MCF 10A (cell line): ENCODE measurements at regions of chr5 and their contacts with region 1.

Region 1: GRCh38 chr5:172770675-172771438 is at the start of gene DUSP1:
- DNase-seq: peak; percentile 99
- H3K4me3 Mint-ChIP-seq: peak within 1 kb of the TSS; percentile 98
- H3K27ac Mint-ChIP-seq: peak within 1 kb of the TSS; percentile 99
- H3K4me1 Mint-ChIP-seq: peaks cover 50% of the 10 kb centered on the region
- H3K27me3 Mint-ChIP-seq: no peaks in the 10 kb centered on the region
- CTCF ChIP-seq: peak; percentile 30
- total RNA-seq, gene DUSP1: 594 and 611 TPM in 2 replicates

Region 2: DNA sequence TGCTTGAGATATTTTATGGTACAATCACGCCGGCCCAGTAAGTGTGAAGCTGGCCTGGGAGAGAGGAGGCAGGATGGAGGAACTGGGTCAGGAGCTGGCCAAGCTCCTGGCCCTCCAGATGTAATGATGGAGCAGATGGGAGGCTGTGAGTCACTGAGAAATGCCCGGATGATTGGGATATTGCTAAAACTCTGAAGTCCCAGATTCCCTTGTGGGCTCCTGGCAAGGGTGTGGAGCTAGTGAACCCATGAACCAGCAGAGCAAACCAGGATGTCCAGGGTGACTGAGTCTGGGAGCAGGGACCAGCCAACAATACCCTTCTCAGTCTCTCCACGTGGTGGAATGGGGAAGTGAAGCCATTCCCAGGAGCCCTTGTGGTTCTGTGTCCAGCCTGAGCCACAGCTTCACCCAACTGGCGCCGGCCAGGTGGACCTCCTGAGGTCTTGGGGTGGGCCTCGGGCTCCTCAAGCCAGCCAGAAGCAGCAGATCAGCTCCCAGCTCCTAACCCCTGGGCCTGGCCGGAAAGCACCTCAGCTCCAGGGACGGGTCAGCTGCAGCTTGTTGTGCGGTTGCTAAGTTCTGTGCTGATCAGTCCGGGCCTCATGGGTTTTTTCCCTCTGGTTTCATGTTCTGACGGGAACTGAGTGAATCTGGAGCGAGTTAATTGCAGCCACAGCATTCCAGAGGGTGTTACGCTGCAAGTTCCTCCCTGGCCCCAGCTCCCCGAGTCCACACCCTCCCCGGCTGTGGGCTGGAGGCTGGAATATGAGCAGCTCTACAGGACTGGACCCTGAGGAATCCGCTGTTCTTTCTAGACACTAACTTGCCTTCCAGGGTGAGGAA is 37.5 kb before region 1 on chr5:
- CTCF ChIA-PET with region 1: interaction called, 35 read pairs
- POLR2A ChIA-PET with region 1: interaction called, 287 read pairs
- intact Hi-C with region 1: no loop called
- DNase-seq: peak; percentile 93
- H3K4me3 Mint-ChIP-seq: peak overlapping the region; percentile 63
- H3K27ac Mint-ChIP-seq: peak overlapping the region; percentile 99
- H3K4me1 Mint-ChIP-seq: peaks cover 44% of the 10 kb centered on the region
- H3K27me3 Mint-ChIP-seq: no peaks in the 10 kb centered on the region
- CTCF ChIP-seq: peak; percentile 18

Region 3: GRCh38 chr5:172801184-172801671 is 30.4 kb after region 1 on chr5:
- CTCF ChIA-PET with region 1: interaction called, 52 read pairs
- POLR2A ChIA-PET with region 1: interaction called, 1,263 read pairs
- intact Hi-C with region 1: loop called (anchors 1 kb)
- DNase-seq: peak; percentile 94
- H3K4me3 Mint-ChIP-seq: peak overlapping the region; percentile 22
- H3K27ac Mint-ChIP-seq: peak overlapping the region; percentile 89
- H3K4me1 Mint-ChIP-seq: peaks cover 53% of the 10 kb centered on the region
- H3K27me3 Mint-ChIP-seq: no peaks in the 10 kb centered on the region
- CTCF ChIP-seq: no peak

Region 4: GRCh38 chr5:172849606-172850453 is 79.0 kb after region 1 on chr5:
- CTCF ChIA-PET with region 1: interaction called, 5 read pairs
- POLR2A ChIA-PET with region 1: interaction called, 431 read pairs
- intact Hi-C with region 1: no loop called
- DNase-seq: peak; percentile 68
- H3K4me3 Mint-ChIP-seq: no peak overlapping the region
- H3K27ac Mint-ChIP-seq: peak overlapping the region; percentile 49
- H3K4me1 Mint-ChIP-seq: peaks cover 78% of the 10 kb centered on the region
- H3K27me3 Mint-ChIP-seq: no peaks in the 10 kb centered on the region
- CTCF ChIP-seq: no peak

Region 5: DNA sequence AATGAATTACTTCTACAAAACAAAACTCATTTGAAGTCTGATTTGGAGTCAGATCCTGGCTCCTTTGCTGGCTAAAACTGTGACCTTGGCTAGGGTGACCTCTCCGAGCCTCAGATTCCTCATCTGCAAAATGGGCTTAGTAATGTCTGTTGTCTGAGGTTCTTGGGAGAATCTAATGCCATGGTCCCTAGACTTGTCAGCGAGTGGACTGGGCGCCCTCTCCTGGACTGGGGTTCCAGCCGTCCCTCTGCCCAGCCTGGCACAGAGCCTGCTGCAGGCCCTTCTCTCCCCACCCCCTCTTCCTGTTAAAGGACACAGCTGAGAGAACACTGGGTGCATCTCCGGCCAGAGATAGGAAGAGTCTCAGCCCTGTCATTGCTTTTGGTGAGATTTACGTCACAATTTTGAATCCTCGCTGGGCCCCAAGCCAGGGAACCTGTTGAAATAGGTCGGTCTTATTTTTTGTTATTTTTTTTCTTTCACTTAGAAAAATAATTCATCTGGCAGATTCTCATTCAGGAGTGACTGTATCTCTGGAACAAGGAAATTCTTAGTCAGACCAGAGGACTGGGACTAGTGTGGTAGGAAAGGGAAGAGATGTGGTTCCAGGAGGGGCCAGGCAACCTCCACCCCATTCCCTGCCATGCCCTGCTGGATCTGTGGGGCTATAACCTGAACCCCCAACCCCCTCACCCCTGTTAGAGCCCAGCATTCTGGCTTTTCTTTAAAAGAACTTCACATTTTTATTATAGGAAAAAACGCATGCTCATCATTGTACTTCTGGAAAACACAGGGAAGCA is 140.2 kb after region 1 on chr5:
- CTCF ChIA-PET with region 1: interaction called, 35 read pairs
- POLR2A ChIA-PET with region 1: interaction called, 910 read pairs
- intact Hi-C with region 1: loop called (anchors 1 kb)
- DNase-seq: peak; percentile 99
- H3K4me3 Mint-ChIP-seq: no peak overlapping the region
- H3K27ac Mint-ChIP-seq: peak overlapping the region; percentile 90
- H3K4me1 Mint-ChIP-seq: peaks cover 43% of the 10 kb centered on the region
- H3K27me3 Mint-ChIP-seq: no peaks in the 10 kb centered on the region
- CTCF ChIP-seq: peak; percentile 50

Region 6: DNA sequence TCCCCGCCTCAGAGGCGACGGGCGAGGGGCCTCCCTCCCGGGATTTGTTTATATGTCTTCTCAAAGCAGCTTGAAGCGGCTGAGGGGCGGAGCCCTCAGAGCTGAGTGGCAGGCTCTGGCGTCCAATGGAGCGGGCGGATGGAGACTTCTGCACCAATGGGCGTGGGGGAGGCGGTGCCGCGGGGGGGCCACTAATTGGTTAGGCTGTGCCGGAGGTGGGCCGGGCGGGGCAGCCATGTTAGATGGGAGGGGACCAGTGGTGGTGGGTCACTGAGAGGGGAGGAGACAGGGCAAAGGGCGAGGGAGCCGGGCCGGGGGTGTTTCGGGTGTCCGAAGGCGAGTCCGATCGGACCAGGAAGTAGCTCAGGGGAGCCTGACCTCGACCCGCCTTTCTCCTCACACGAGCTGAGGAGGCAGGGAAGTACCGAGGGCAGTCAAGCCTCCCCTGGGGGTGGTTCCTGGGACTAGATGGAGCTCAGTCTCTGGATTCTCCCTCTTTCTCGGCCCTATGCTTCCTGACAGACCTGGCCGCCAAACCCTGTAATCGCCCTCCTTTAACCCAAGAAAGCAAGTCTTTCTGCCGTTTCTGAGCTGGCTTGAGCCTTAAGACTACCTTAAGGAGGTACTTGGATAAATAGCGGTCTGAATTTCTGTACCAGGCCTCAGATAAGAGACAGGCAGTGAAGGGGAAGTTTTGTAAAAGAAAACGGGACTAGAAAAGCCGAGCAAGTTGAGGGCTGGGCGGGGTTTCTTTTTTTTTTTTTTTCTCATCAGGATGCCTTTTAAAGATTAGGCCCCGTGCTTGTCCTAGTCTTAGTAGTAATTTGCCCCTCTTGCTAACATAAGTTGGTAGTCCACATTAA is 286.4 kb after region 1 on chr5:
- CTCF ChIA-PET with region 1: interaction called, 4 read pairs
- POLR2A ChIA-PET with region 1: interaction called, 6 read pairs
- intact Hi-C with region 1: loop called (anchors 2 kb)
- DNase-seq: peak; percentile 100
- H3K4me3 Mint-ChIP-seq: peak overlapping the region; percentile 99
- H3K27ac Mint-ChIP-seq: peak overlapping the region; percentile 80
- H3K4me1 Mint-ChIP-seq: peaks cover 16% of the 10 kb centered on the region
- H3K27me3 Mint-ChIP-seq: no peaks in the 10 kb centered on the region
- CTCF ChIP-seq: no peak